Tibial artery (tissue), 4 donors: ENCODE measurements at regions of chr5 and their contacts with region 1.

Region 1: GRCh38 chr5:178163772-178164735 is 10.4 kb upstream of the NHP2 start:
- DNase-seq: peak; percentile 81 to 90
- H3K4me3 ChIP-seq: peak overlapping the region in 1 of 2 donors; percentile 31
- H3K27ac ChIP-seq: no peak overlapping the region
- H3K4me1 ChIP-seq: peaks cover 0 to 8% (median 6%) of the 10 kb centered on the region in 4 donors
- H3K27me3 ChIP-seq: peaks cover 0 to 46% of the 10 kb centered on the region in 2 donors
- CTCF ChIP-seq: peak; percentile 97 to 98

Region 2: DNA sequence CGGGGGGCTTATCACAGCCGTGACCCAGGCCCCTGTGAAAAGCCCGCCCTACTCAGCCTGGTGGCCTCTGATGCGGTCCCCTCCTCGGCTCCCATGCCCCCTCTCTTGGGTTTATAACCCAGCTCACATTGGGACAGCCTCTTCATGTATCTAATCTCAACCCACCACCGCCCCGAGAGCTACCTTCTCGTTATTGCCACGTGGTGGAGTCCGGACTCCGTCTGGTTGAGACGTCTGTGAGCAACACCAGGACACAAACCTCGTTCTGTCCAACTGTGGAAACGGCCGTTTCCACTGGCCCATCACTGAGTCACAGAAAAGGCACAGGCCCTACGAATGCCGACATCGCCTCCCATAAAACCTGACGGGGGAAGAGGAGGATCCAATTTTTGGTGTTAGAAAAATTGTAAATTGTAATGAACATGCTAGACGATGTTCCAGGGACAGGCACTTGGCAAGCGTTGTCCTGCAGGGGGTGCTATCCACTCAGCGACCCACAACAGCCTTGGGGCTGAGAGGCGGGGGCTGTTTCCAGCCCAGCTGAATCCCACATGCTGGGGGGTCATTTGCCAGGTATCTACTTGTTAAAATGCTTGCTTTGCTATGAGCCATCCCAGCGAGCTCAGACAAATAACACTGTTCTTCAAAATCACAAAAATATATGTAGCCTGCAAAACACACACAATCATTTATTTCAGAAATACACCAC is 88.1 kb before region 1 on chr5:
- intact Hi-C with region 1: loop called (anchors 2 kb)
- DNase-seq: peak; percentile 35 to 67
- H3K4me3 ChIP-seq: no peak overlapping the region
- H3K27ac ChIP-seq: no peak overlapping the region
- H3K4me1 ChIP-seq: peaks cover 0 to 5% (median 0%) of the 10 kb centered on the region in 4 donors
- H3K27me3 ChIP-seq: peaks cover 0 to 45% of the 10 kb centered on the region in 2 donors
- CTCF ChIP-seq: peak; percentile 54 to 60